ENCODE measurements at regions of chr10 and their contacts with region 1.

Region 1: GRCh38 chr10:58513188-58514110 is 777 bp downstream of the BICC1 start:
- DNase-seq: peak; percentile 84
- ATAC-seq: peak; percentile 35
- H3K4me3 ChIP-seq: peak overlapping the region; percentile 72
- H3K27ac ChIP-seq: peak overlapping the region; percentile 77
- H3K4me1 ChIP-seq: peaks cover 8% of the 10 kb centered on the region
- H3K27me3 ChIP-seq: no peaks in the 10 kb centered on the region
- CTCF ChIP-seq: no peak
- POLR2A ChIP-seq: peak; percentile 23; the same call in 1 of the 2 replicates
- RAD21 ChIP-seq: peak; percentile 8; the same call in 1 of the 2 replicates

Region 2: GRCh38 chr10:58457761-58458616 is 55.5 kb before region 1 on chr10:
- CTCF ChIA-PET with region 1: no interaction called
- POLR2A ChIA-PET with region 1: no interaction called
- dilution Hi-C with region 1: no loop called
- in situ Hi-C with region 1: no loop called
- intact Hi-C with region 1: loop called (anchors 2 kb)
- DNase-seq: peak; percentile 98
- ATAC-seq: peak; percentile 94
- H3K4me3 ChIP-seq: no peak overlapping the region
- H3K27ac ChIP-seq: peak overlapping the region; percentile 95
- H3K4me1 ChIP-seq: peaks cover 7% of the 10 kb centered on the region
- H3K27me3 ChIP-seq: no peaks in the 10 kb centered on the region
- CTCF ChIP-seq: no peak
- POLR2A ChIP-seq: no peak
- RAD21 ChIP-seq: no peak